ENCODE measurements at regions of chr3 and their contacts with region 1.

Region 1: DNA sequence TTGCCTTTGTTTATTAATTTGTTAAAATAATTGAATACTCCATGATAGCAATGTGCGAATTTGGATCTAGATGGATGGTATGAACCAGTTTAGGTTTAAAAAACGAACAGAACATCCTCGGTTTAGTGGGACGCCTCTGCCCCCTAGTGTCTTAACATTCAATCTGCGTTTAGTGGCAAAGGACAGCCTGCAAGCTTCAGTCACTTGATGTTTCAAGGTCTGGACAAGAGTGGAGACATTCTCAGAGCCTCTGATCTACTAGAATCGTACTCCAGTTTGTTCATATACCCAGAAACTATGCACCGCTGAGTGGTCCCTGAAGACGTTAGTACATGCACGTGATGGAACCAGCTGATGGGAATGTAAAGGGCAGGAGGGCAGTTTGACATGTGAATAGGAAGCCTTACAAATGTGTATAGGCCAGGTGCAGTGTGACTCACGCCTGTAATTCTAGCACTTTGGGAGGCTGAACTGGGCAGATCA is 17.8 kb upstream of the ATP13A4 start:
- DNase-seq: peak; percentile 25 to 73
- ATAC-seq: peak; percentile 90 to 93
- H3K4me3 ChIP-seq: no peak overlapping the region
- H3K27ac ChIP-seq: no peak overlapping the region
- H3K4me1 ChIP-seq: no peaks in the 10 kb centered on the region
- CTCF ChIP-seq: peak; percentile 78
- EP300 ChIP-seq: no peak
- POLR2A ChIP-seq: no peak
- RAD21 ChIP-seq: peak; percentile 81 to 84

Region 2: DNA sequence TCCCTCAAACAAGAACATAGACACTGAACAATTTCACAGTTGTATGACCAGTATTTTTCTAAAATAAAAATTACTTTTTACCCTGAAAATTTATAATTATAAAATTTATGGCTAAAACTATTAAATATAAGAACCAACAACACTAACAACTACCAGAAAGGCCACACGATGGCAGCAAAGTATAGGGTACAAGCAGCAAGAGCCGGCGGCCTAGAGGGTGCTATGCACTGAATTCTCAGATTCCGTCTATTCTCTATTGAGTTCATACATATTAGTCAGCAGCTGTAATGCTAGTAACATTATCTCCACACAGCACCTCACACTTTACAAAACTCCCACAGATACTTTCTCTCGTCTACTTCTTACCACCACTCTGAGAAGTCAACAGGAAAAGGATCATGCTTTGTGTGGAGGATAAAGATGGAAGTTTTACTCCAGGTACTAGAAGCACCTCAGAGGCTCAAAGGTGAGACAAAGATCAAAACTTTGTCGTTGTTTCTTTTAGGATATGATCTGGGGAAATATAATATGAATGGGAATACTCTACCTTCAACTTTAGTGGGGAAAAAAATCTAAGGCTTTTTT is 1005.7 kb before region 1 on chr3:
- CTCF ChIA-PET with region 1: interaction called, 16 read pairs
- POLR2A ChIA-PET with region 1: no interaction called
- DNase-seq: peak; percentile 13 to 71
- ATAC-seq: peak; percentile 75 to 90
- H3K4me3 ChIP-seq: no peak overlapping the region
- H3K27ac ChIP-seq: no peak overlapping the region
- H3K4me1 ChIP-seq: 0 out of 3 replicates have a peak, but pooled peaks cover 4% of the 10 kb centered on the region
- CTCF ChIP-seq: peak; percentile 81
- EP300 ChIP-seq: no peak
- POLR2A ChIP-seq: no peak
- RAD21 ChIP-seq: peak; percentile 85 to 89

Region 3: DNA sequence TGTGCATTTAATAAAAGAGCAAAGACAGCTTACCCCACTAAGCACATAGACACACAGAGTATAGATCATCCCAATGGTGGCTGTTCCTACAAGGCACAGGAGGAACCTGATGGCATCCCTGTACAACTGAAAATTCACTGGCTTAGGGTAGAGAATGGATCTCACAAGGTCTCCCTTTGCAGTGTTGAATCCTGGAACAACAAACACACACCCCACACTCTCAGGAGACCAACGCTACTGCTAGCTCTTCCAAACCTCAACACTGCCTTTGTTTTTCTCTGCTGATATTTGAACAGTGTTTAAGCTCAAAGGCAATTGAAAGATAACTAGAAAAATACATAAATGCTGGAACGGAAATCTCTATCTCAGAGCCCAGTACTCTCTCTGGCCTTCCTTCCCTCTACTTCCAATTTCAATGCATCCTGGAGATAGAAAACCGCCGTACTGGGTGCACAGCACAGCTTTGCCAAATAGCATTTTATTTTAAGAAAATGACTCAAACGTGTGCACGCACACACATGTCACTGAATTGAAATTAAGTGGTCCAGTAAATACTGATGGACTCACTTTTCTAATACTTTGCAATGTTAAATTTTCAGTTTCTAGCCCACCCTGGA is 106.4 kb before region 1 on chr3:
- CTCF ChIA-PET with region 1: interaction called, 16 read pairs
- POLR2A ChIA-PET with region 1: no interaction called
- DNase-seq: no peak
- ATAC-seq: no peak
- H3K4me3 ChIP-seq: no peak overlapping the region
- H3K27ac ChIP-seq: no peak overlapping the region
- H3K4me1 ChIP-seq: no peaks in the 10 kb centered on the region
- CTCF ChIP-seq: no peak
- EP300 ChIP-seq: no peak
- POLR2A ChIP-seq: no peak
- RAD21 ChIP-seq: no peak

Region 4: GRCh38 chr3:193637831-193638230 is 65.4 kb after region 1 on chr3:
- CTCF ChIA-PET with region 1: no interaction called
- POLR2A ChIA-PET with region 1: no interaction called
- DNase-seq: no peak
- ATAC-seq: no peak
- H3K4me3 ChIP-seq: no peak overlapping the region
- H3K27ac ChIP-seq: no peak overlapping the region
- H3K4me1 ChIP-seq: no peaks in the 10 kb centered on the region
- CTCF ChIP-seq: no peak
- EP300 ChIP-seq: no peak
- POLR2A ChIP-seq: no peak
- RAD21 ChIP-seq: no peak

Measured in A549 (cell line).